PC-9 (cell line): ENCODE measurements at regions of chr15 and their contacts with region 1.

Region 1: GRCh38 chr15:63504247-63504978 is at the start of gene USP3:
- DNase-seq: peak; percentile 75 to 95
- H3K4me3 ChIP-seq: peak within 1 kb of the TSS; percentile 91
- H3K27ac ChIP-seq: peak within 1 kb of the TSS; percentile 97
- H3K4me1 ChIP-seq: peaks cover 66% of the 10 kb centered on the region
- H3K27me3 ChIP-seq: no peaks in the 10 kb centered on the region
- CTCF ChIP-seq: no peak; the same call in 1 of the 2 replicates
- total RNA-seq, gene USP3: 57.5 and 59.7 TPM in 2 replicates

Region 2: DNA sequence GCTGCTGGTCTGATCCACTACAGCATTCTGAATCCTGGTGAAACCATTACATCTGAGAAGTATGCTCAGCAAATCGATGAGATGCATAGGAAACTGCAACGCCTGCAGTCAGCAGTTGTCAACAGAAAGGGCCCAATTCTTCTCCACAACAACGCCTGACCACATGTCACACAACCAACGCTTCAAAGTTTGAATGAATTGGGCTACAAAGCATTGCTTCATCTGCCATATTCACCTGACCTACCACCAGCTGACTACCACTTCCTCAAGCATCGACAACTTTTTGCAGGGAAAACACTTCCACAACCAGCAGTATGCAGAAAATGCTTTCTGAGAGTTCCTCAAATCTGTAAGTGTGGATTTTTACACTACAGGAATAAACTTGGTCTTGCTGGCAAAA is 1284.6 kb before region 1 on chr15:
- CTCF ChIA-PET with region 1: interaction called, 18 read pairs
- POLR2A ChIA-PET with region 1: no interaction called
- intact Hi-C with region 1: no loop called
- DNase-seq: no peak
- H3K4me3 ChIP-seq: no peak overlapping the region
- H3K27ac ChIP-seq: no peak overlapping the region
- H3K4me1 ChIP-seq: no peaks in the 10 kb centered on the region
- H3K27me3 ChIP-seq: 0 out of 2 replicates have a peak, but pooled peaks cover 13% of the 10 kb centered on the region
- CTCF ChIP-seq: no peak

Region 3: GRCh38 chr15:63675283-63675682 is 170.9 kb after region 1 on chr15:
- CTCF ChIA-PET with region 1: interaction called, 14 read pairs
- POLR2A ChIA-PET with region 1: no interaction called
- intact Hi-C with region 1: no loop called
- DNase-seq: no peak
- H3K4me3 ChIP-seq: no peak overlapping the region
- H3K27ac ChIP-seq: no peak overlapping the region
- H3K4me1 ChIP-seq: no peaks in the 10 kb centered on the region
- H3K27me3 ChIP-seq: no peaks in the 10 kb centered on the region
- CTCF ChIP-seq: no peak